PC-9 (cell line): ENCODE measurements at regions of chr22 and their contacts with region 1.

Region 1: DNA sequence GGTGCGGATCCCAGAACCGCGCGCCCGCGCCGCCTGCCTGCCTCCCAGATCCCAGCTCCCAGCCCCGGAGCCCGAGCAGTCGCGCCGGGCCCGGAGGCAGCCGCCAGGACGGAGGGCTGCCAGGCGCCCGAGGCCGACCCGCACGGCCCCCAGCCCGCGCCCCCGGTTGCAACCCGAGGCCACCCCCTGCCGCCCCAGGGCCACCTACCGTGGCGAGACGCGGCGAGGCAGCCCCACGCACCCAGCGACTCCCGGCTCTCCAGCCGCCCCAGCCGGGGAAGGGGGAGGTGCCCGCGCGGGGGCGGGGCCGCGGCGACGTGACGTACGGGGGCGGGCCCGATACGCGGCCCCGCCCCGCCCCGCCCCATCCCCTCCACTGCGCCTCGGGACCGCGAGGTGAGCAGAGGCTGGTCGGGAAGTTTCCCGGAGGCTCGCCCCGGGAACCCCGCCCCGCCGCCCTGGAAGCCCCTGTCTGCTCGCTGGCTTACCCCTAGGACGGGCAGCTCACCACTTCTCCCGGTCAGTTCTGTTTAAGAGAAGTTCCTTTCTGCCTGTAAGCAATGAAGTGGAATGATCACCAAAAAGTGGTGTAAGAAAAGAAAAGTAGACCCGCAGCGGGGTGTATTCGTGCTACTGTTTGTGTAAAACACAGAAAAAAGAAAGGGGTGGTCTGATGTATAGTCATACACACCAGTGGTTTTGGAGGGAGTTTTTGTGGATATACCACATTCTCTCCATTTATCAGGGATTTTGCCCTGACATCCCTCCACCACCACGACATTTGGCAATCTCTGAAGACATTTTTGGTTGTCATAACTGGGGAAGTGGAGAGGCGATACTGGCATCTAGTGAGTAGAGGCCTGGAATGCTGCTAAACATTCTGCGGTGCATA is at the start of gene TPST2:
- DNase-seq: peak; percentile 41 to 65
- H3K4me3 ChIP-seq: peak within 1 kb of the TSS; percentile 64
- H3K27ac ChIP-seq: no peak within 1 kb of the TSS
- H3K4me1 ChIP-seq: no peaks in the 10 kb centered on the region
- H3K27me3 ChIP-seq: peaks cover 10% of the 10 kb centered on the region
- CTCF ChIP-seq: no peak
- total RNA-seq, gene TPST2: 13.5 and 18.9 TPM in 2 replicates

Region 2: GRCh38 chr22:26511857-26512793 is 78.0 kb before region 1 on chr22 and contains the start of gene TFIP11:
- CTCF ChIA-PET with region 1: no interaction called
- POLR2A ChIA-PET with region 1: no interaction called
- intact Hi-C with region 1: loop called (anchors 1 kb)
- DNase-seq: peak; percentile 82 to 90
- H3K4me3 ChIP-seq: peak within 1 kb of the TSS; percentile 95
- H3K27ac ChIP-seq: peak within 1 kb of the TSS; percentile 44
- H3K4me1 ChIP-seq: peaks cover 15% of the 10 kb centered on the region
- H3K27me3 ChIP-seq: no peaks in the 10 kb centered on the region
- CTCF ChIP-seq: no peak
- total RNA-seq, gene TFIP11: 17.3 and 18.5 TPM in 2 replicates